ENCODE measurements at regions of chr6 and their contacts with region 1.

Region 1: DNA sequence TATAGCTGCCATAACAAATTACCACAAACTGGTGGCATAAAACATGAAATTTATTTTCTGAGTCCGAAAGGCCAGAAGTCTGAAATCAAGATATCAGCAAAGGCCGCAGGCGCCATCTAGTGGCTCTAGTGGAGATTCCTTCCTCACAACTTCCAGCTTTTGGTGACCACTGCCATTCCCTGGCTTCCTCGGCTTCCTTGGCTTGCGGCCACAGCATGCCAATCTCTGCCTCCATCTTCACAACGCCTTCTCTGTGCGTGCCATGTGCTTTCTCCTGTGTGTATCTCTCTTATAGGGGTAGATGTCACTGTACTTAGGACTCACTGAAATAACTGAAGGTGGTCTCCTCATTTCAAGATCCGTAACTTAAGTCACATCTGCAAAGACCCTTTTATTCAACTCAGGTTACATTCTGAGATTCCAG is 5.4 kb upstream of the PLAGL1 start:
- DNase-seq: peak; percentile 66
- H3K4me3 ChIP-seq: peak overlapping the region in 1 of 2 experiments; percentile 27; a peak in 1 of 4 replicates
- H3K27ac ChIP-seq: no peak overlapping the region
- H3K4me1 ChIP-seq: no peaks in the 10 kb centered on the region
- H3K27me3 ChIP-seq: no peaks in the 10 kb centered on the region
- CTCF ChIP-seq: peak; percentile 83
- EP300 ChIP-seq: no peak
- RAD21 ChIP-seq: peak; percentile 92

Region 2: DNA sequence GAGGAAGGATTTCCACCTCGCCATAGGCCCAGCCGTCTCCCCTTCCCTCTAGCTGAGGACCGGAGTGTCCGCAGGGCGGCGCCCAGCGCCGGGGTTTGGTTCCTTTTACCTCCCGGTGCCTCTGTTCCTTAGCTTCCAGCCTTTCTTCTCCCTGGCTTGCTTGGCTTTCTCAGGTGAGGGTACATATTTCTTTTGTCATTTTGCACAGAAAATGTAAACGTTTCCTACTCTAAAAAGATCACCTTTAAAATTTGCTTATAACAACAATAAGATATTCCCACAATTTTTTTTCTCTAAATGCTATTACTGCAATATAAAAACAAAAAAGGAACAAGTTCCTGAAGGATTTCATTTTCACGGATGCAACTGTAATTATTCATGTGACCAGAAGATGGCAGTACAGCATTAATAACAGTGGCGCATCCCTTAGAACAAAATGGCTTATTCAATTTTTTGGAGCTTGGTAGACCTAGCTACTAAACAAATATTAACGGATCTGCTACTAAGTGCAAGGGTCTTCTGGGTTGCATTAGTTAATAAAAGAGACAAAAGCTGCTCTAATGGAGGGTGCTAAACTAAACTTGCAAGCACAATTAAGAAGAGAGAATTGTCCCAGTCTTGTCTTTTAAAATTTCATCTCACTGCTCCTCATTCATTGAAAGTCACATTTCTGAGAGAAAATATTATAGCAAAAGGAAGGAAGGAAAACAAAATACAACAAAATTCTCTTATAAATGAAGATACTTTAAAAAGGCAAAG is 1538.8 kb before region 1 on chr6:
- CTCF ChIA-PET with region 1: interaction called, 16 read pairs
- POLR2A ChIA-PET with region 1: no interaction called
- DNase-seq: peak; percentile 47
- H3K4me3 ChIP-seq: peak overlapping the region; percentile 12 to 37; a peak in 2 of 4 replicates
- H3K27ac ChIP-seq: peak overlapping the region; percentile 19 to 66; a peak in 3 of 4 replicates
- H3K4me1 ChIP-seq: peaks cover 0 to 2% of the 10 kb centered on the region in 2 experiments; a peak in 2 of 4 replicates
- H3K27me3 ChIP-seq: no peaks in the 10 kb centered on the region
- CTCF ChIP-seq: peak; percentile 76
- EP300 ChIP-seq: no peak
- RAD21 ChIP-seq: peak; percentile 90

Region 3: GRCh38 chr6:143583542-143584327 is 429.8 kb before region 1 on chr6:
- CTCF ChIA-PET with region 1: interaction called, 142 read pairs
- POLR2A ChIA-PET with region 1: no interaction called
- DNase-seq: no peak
- H3K4me3 ChIP-seq: no peak overlapping the region
- H3K27ac ChIP-seq: no peak overlapping the region
- H3K4me1 ChIP-seq: peaks cover 0 to 4% of the 10 kb centered on the region in 2 experiments; a peak in 1 of 4 replicates
- H3K27me3 ChIP-seq: no peaks in the 10 kb centered on the region
- CTCF ChIP-seq: no peak
- EP300 ChIP-seq: no peak
- RAD21 ChIP-seq: no peak

Region 4: GRCh38 chr6:143677891-143678791 is 335.4 kb before region 1 on chr6 and contains the start of gene PHACTR2:
- CTCF ChIA-PET with region 1: no interaction called
- POLR2A ChIA-PET with region 1: no interaction called
- DNase-seq: peak; percentile 94
- H3K4me3 ChIP-seq: peak within 1 kb of the TSS; percentile 82 to 87
- H3K27ac ChIP-seq: peak within 1 kb of the TSS; percentile 72 to 78
- H3K4me1 ChIP-seq: peaks cover 0 to 11% of the 10 kb centered on the region in 2 experiments; a peak in 3 of 4 replicates
- H3K27me3 ChIP-seq: no peaks in the 10 kb centered on the region
- CTCF ChIP-seq: no peak
- EP300 ChIP-seq: no peak
- RAD21 ChIP-seq: no peak
- polyA plus RNA-seq, gene PHACTR2: 5.0 and 8.6 TPM in 2 replicates

Region 5: DNA sequence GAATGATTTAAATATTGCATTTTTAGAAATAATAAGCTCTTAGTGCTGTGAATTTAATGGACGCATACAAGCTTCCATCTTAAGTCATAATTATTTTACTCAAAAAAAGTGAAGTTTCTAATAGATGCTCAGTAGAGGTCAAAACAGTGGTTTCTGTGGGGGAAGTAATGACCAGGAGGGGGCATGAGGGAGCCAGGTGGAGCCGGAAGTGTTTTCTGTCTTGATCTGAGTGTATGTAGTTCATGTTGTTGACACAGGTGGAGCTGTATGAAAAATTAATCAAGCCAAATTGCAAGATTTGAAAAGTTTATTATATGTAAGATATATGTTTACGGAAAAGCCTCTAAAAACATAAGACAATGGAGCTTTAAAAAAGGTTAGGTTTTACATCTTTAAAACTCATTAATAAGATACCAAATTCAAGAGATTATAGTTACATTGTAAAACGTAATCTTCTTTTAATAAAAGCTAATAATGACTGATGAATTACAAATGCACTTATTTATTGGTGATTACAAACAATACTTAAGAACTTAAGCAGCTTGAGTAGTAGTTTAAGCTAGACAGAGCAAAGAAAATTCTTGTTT is 73.4 kb before region 1 on chr6:
- CTCF ChIA-PET with region 1: interaction called, 47 read pairs
- POLR2A ChIA-PET with region 1: no interaction called
- DNase-seq: peak; percentile 63
- H3K4me3 ChIP-seq: no peak overlapping the region
- H3K27ac ChIP-seq: no peak overlapping the region
- H3K4me1 ChIP-seq: no peaks in the 10 kb centered on the region
- H3K27me3 ChIP-seq: no peaks in the 10 kb centered on the region
- CTCF ChIP-seq: peak; percentile 65
- EP300 ChIP-seq: no peak
- RAD21 ChIP-seq: peak; percentile 48

Region 6: DNA sequence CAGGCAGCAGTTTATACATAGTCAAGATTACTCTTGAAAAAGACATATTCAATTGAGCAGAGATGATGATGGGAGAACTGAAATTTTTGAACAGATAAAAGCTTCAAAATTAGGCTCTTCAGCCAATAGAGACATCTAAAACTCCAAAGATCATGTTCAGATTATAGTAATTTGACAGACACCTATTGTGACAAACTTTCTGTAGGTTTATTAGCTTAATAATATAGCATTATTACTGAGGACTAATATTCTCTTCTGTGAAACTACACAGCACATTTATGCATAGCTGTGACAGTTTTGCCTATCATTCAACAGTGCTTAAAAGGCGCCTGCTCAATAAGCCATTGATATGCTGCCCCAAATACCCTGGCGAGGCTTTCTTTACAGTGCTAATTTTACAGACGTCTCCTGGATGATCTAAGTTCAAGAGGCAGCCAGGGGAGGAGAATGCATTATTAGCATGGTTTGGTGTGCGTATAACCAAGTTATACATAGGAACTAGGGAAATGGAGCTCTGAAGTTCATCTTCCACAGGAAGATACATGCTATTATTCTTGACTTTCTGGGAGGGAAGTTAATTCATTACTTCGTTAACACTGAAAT is 26.9 kb before region 1 on chr6:
- CTCF ChIA-PET with region 1: interaction called, 11 read pairs
- POLR2A ChIA-PET with region 1: no interaction called
- DNase-seq: no peak
- H3K4me3 ChIP-seq: no peak overlapping the region
- H3K27ac ChIP-seq: no peak overlapping the region
- H3K4me1 ChIP-seq: no peaks in the 10 kb centered on the region
- H3K27me3 ChIP-seq: no peaks in the 10 kb centered on the region
- CTCF ChIP-seq: no peak
- EP300 ChIP-seq: no peak
- RAD21 ChIP-seq: no peak

Region 7: GRCh38 chr6:143998686-143999085 is 14.8 kb before region 1 on chr6:
- CTCF ChIA-PET with region 1: interaction called, 12 read pairs
- POLR2A ChIA-PET with region 1: no interaction called
- DNase-seq: no peak
- H3K4me3 ChIP-seq: no peak overlapping the region
- H3K27ac ChIP-seq: no peak overlapping the region
- H3K4me1 ChIP-seq: no peaks in the 10 kb centered on the region
- H3K27me3 ChIP-seq: no peaks in the 10 kb centered on the region
- CTCF ChIP-seq: no peak
- EP300 ChIP-seq: no peak
- RAD21 ChIP-seq: no peak

Region 8: DNA sequence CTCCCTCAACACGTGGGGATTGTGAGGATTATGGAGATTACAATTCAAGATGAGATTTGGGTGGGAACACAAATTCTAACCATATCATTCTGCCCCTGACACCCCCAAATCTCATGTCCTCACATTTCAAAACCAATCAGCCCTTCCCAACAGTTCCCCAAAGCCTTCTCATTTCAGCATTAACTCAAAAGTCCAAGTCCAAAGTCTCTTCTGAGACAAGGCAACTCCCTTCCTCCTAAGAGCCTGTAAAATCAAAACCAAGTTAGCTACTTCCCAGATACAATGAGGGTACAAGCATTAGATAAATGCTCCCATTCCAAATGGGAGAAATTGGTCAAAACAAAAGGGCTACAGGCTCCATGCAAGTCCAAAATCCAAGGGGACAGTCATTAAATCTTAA is 34.2 kb after region 1 on chr6:
- CTCF ChIA-PET with region 1: no interaction called
- POLR2A ChIA-PET with region 1: no interaction called
- DNase-seq: no peak
- H3K4me3 ChIP-seq: no peak overlapping the region
- H3K27ac ChIP-seq: no peak overlapping the region
- H3K4me1 ChIP-seq: no peaks in the 10 kb centered on the region
- H3K27me3 ChIP-seq: no peaks in the 10 kb centered on the region
- CTCF ChIP-seq: no peak
- EP300 ChIP-seq: no peak
- RAD21 ChIP-seq: no peak

Measured in SK-N-SH (cell line).